ENCODE measurements at regions of chr5 and their contacts with region 1.

Region 1: GRCh38 chr5:148820461-148821395 is 5.7 kb upstream of the ADRB2 start:
- DNase-seq: peak in 4 of 14 experiments; percentile 42 to 70 (median 58)
- ATAC-seq: no peak
- H3K4me3 ChIP-seq: no peak overlapping the region
- H3K4me3 Mint-ChIP-seq: no peak overlapping the region
- H3K27ac ChIP-seq: no peak overlapping the region
- H3K27ac Mint-ChIP-seq: no peak overlapping the region
- H3K4me1 ChIP-seq: peaks cover 3% of the 10 kb centered on the region
- H3K4me1 Mint-ChIP-seq: peaks cover 5% of the 10 kb centered on the region
- H3K27me3 ChIP-seq: peaks cover 0 to 4% of the 10 kb centered on the region in 2 experiments
- H3K27me3 Mint-ChIP-seq: peaks cover 5% of the 10 kb centered on the region
- CTCF ChIP-seq: peak; percentile 60

Region 2: GRCh38 chr5:148583429-148583965 is 237.2 kb before region 1 on chr5:
- CTCF ChIA-PET with region 1: no interaction called
- POLR2A ChIA-PET with region 1: no interaction called
- intact Hi-C with region 1: no loop called
- DNase-seq: no peak
- ATAC-seq: no peak
- H3K4me3 ChIP-seq: no peak overlapping the region
- H3K4me3 Mint-ChIP-seq: no peak overlapping the region
- H3K27ac ChIP-seq: no peak overlapping the region
- H3K27ac Mint-ChIP-seq: no peak overlapping the region
- H3K4me1 ChIP-seq: no peaks in the 10 kb centered on the region
- H3K4me1 Mint-ChIP-seq: no peaks in the 10 kb centered on the region
- H3K27me3 ChIP-seq: no peaks in the 10 kb centered on the region
- H3K27me3 Mint-ChIP-seq: no peaks in the 10 kb centered on the region
- CTCF ChIP-seq: no peak

Region 3: DNA sequence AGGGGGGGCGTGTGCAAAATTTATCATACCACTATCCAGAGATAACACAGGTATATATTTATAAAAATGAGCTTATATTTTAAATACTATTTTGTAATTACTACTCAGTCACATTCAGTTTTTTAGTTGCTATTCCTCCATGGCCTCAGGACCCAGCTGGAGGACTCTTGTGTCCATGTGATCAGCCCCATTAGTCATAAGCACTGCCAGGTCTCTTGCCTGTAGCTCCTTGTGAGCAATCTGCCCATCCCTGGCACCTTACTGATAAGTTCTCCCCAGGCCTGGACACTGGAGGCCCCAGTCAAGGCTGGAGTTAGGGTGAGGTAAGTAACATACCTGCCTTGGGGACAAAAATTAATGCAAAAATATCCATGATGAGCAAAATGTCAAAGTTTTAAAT is 23.8 kb before region 1 on chr5:
- CTCF ChIA-PET with region 1: no interaction called
- POLR2A ChIA-PET with region 1: no interaction called
- intact Hi-C with region 1: loop called in 1 of 2 experiments (anchors 1 kb)
- DNase-seq: peak in 1 of 14 experiments; percentile 25
- ATAC-seq: no peak
- H3K4me3 ChIP-seq: no peak overlapping the region
- H3K4me3 Mint-ChIP-seq: no peak overlapping the region
- H3K27ac ChIP-seq: no peak overlapping the region
- H3K27ac Mint-ChIP-seq: no peak overlapping the region
- H3K4me1 ChIP-seq: no peaks in the 10 kb centered on the region
- H3K4me1 Mint-ChIP-seq: no peaks in the 10 kb centered on the region
- H3K27me3 ChIP-seq: peaks cover 0 to 4% of the 10 kb centered on the region in 2 experiments
- H3K27me3 Mint-ChIP-seq: no peaks in the 10 kb centered on the region
- CTCF ChIP-seq: no peak

Region 4: GRCh38 chr5:148957591-148958202 is 137.0 kb after region 1 on chr5:
- CTCF ChIA-PET with region 1: interaction called, 4 read pairs
- POLR2A ChIA-PET with region 1: interaction called, 3 read pairs
- intact Hi-C with region 1: loop called in 1 of 2 experiments (anchors 5 kb)
- DNase-seq: peak in 13 of 14 experiments; percentile 6 to 63 (median 25)
- ATAC-seq: no peak
- H3K4me3 ChIP-seq: no peak overlapping the region
- H3K4me3 Mint-ChIP-seq: no peak overlapping the region
- H3K27ac ChIP-seq: no peak overlapping the region
- H3K27ac Mint-ChIP-seq: no peak overlapping the region
- H3K4me1 ChIP-seq: no peaks in the 10 kb centered on the region
- H3K4me1 Mint-ChIP-seq: no peaks in the 10 kb centered on the region
- H3K27me3 ChIP-seq: no peaks in the 10 kb centered on the region
- H3K27me3 Mint-ChIP-seq: no peaks in the 10 kb centered on the region
- CTCF ChIP-seq: peak; percentile 72

Region 5: DNA sequence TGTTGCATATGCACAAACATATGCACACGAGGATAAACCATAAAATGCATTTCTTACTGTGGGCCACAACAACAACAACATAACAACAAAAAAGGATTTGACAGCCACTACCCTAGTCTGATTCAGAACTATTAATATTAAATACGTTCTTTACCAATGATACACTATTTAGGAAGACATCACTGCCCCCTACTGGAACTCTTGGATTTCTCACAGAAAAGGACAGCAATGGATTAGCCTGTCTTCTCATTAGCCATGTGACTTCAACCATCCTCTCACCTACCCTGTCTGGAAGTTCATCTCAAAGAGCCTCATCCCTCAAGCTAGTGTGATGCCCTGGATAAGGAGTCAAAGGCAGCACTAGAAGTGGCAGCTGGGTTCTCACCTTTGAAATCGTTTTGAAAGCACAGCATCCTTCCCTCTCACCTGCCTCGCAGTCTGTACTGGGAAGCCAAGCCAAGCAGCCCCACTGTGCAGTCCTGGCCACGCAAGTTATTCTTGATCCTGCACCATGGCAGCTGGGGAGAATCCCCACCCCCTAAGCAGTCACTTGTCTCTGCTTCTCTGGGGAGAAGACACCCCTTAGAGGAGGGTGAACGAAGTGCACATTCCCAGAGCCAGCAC is 177.6 kb after region 1 on chr5:
- CTCF ChIA-PET with region 1: no interaction called
- POLR2A ChIA-PET with region 1: no interaction called
- intact Hi-C with region 1: loop called in 1 of 2 experiments (anchors 5 kb)
- DNase-seq: peak in 5 of 14 experiments; percentile 5 to 73 (median 66)
- ATAC-seq: no peak
- H3K4me3 ChIP-seq: no peak overlapping the region
- H3K4me3 Mint-ChIP-seq: no peak overlapping the region
- H3K27ac ChIP-seq: no peak overlapping the region
- H3K27ac Mint-ChIP-seq: no peak overlapping the region
- H3K4me1 ChIP-seq: no peaks in the 10 kb centered on the region
- H3K4me1 Mint-ChIP-seq: no peaks in the 10 kb centered on the region
- H3K27me3 ChIP-seq: no peaks in the 10 kb centered on the region
- H3K27me3 Mint-ChIP-seq: peaks cover 36% of the 10 kb centered on the region
- CTCF ChIP-seq: peak; percentile 32